ENCODE measurements at regions of chr22 and their contacts with region 1.

Region 1: GRCh38 chr22:38167988-38168431 is 13.6 kb downstream of the PLA2G6 start:
- DNase-seq: peak; percentile 46
- H3K4me3 Mint-ChIP-seq: peak overlapping the region; percentile 69
- H3K27ac Mint-ChIP-seq: peak overlapping the region; percentile 92
- H3K4me1 Mint-ChIP-seq: peaks cover 68% of the 10 kb centered on the region
- H3K27me3 Mint-ChIP-seq: no peaks in the 10 kb centered on the region
- CTCF ChIP-seq: no peak

Region 2: GRCh38 chr22:37953437-37954179 is 214.4 kb before region 1 on chr22 and contains the starts of genes C22orf23 and POLR2F:
- CTCF ChIA-PET with region 1: interaction called, 10 read pairs
- intact Hi-C with region 1: no loop called
- DNase-seq: peak; percentile 93
- H3K4me3 Mint-ChIP-seq: peak within 1 kb of the TSS; percentile 94
- H3K27ac Mint-ChIP-seq: peak within 1 kb of the TSS; percentile 87
- H3K4me1 Mint-ChIP-seq: peaks cover 23% of the 10 kb centered on the region
- H3K27me3 Mint-ChIP-seq: no peaks in the 10 kb centered on the region
- CTCF ChIP-seq: peak; percentile 15
- total RNA-seq, gene C22orf23: 0.52 and 0.69 TPM in 2 replicates
- total RNA-seq, gene POLR2F: 105 and 111 TPM in 2 replicates

Region 3: GRCh38 chr22:38114484-38115398 is 53.3 kb before region 1 on chr22:
- CTCF ChIA-PET with region 1: interaction called, 3 read pairs
- intact Hi-C with region 1: loop called (anchors 10 kb)
- DNase-seq: peak; percentile 93
- H3K4me3 Mint-ChIP-seq: no peak overlapping the region
- H3K27ac Mint-ChIP-seq: peak overlapping the region; percentile 22
- H3K4me1 Mint-ChIP-seq: peaks cover 45% of the 10 kb centered on the region
- H3K27me3 Mint-ChIP-seq: no peaks in the 10 kb centered on the region
- CTCF ChIP-seq: peak; percentile 82